Activated CD8-positive, alpha-beta T cell treated with anti-CD3 and anti-CD28 coated beads for 36 hours (primary cell): ENCODE measurements at regions of chr18 and their contacts with region 1.

Region 1: DNA sequence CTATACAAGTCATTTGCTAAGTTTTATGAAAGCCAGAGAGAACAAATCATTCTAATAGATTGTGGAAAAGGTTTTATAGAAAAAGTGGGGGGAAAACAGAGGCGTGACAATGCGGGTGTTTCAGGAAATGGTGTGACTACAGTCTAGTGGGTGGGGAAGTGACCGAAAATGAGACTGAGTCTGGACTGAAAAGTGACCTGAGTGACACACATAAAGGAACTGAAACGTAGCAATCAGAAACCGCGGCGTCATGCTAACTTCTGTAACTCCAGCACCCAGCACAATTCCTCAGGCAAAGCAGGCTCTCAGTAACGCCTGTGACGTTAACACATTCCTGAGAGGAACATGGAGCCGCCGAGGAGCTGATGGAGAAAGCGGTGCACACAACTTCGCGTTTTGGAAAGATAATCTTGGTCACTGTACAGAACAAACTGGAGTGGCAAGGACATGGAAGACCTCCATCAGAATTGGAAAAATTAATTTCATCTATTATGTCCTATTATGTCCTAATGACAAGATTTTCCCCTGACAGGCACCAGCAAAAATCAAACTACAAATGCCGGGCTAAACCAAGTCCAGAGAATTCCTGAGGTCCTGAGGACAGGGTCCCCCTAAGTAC is 1.4 kb upstream of the CD226 start:
- DNase-seq: peak; percentile 83
- ATAC-seq: peak; percentile 43
- H3K4me3 Mint-ChIP-seq: no peak overlapping the region
- H3K27ac Mint-ChIP-seq: no peak overlapping the region
- H3K4me1 Mint-ChIP-seq: peaks cover 37% of the 10 kb centered on the region
- H3K27me3 Mint-ChIP-seq: no peaks in the 10 kb centered on the region
- CTCF ChIP-seq: no peak

Region 2: DNA sequence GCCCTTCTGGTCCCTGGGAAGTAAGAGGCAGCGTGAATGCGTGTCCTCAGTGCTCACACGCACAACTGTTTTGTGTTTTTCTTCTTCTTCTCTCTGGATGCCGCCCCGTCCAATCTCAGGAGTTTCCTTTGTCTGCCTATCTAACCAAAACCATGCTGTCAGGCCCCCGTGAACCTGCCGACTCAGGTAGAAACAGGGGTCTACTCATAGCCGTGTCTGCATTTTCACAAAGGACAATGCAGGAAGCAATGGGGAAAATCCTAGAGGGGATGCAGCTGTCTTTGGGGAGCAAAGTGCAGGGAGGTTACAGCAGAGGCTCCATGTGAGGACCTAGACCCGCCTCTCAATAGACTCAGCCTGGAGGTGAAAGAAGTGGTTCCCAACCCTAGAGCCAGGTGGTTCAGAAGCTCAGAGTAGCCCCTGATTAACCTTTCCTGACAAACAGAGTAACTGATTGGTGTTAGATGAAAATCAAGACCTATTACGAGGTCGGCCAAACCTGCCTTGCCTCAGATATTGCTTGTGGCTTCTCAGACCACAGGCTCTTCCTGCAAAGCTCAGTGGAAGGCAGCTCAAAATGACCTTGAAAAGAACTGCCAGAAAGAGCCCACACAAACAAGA is 50.7 kb before region 1 on chr18:
- CTCF ChIA-PET with region 1: interaction called, 9 read pairs
- POLR2A ChIA-PET with region 1: interaction called, 19 read pairs
- intact Hi-C with region 1: no loop called
- DNase-seq: peak; percentile 55
- ATAC-seq: peak; percentile 32
- H3K4me3 Mint-ChIP-seq: peak overlapping the region; percentile 71
- H3K27ac Mint-ChIP-seq: peak overlapping the region; percentile 94
- H3K4me1 Mint-ChIP-seq: peaks cover 64% of the 10 kb centered on the region
- H3K27me3 Mint-ChIP-seq: no peaks in the 10 kb centered on the region
- CTCF ChIP-seq: no peak

Region 3: GRCh38 chr18:70072678-70073077 is 123.7 kb after region 1 on chr18:
- CTCF ChIA-PET with region 1: no interaction called
- POLR2A ChIA-PET with region 1: no interaction called
- intact Hi-C with region 1: loop called (anchors 10 kb)
- DNase-seq: no peak
- ATAC-seq: no peak
- H3K4me3 Mint-ChIP-seq: no peak overlapping the region
- H3K27ac Mint-ChIP-seq: no peak overlapping the region
- H3K4me1 Mint-ChIP-seq: peaks cover 10% of the 10 kb centered on the region
- H3K27me3 Mint-ChIP-seq: no peaks in the 10 kb centered on the region
- CTCF ChIP-seq: peak; percentile 12